HepG2 (cell line): ENCODE measurements at regions of chr9 and their contacts with region 1.

Region 1: GRCh38 chr9:130872912-130873503 is 23.6 kb downstream of the QRFP start:
- DNase-seq: peak; percentile 84
- ATAC-seq: peak; percentile 99
- H3K4me3 ChIP-seq: no peak overlapping the region
- H3K27ac ChIP-seq: peak overlapping the region; percentile 57
- H3K4me1 ChIP-seq: peaks cover 24% of the 10 kb centered on the region
- H3K27me3 ChIP-seq: no peaks in the 10 kb centered on the region
- CTCF ChIP-seq: no peak
- EP300 ChIP-seq: no peak
- POLR2A ChIP-seq: no peak
- RAD21 ChIP-seq: no peak

Region 2: DNA sequence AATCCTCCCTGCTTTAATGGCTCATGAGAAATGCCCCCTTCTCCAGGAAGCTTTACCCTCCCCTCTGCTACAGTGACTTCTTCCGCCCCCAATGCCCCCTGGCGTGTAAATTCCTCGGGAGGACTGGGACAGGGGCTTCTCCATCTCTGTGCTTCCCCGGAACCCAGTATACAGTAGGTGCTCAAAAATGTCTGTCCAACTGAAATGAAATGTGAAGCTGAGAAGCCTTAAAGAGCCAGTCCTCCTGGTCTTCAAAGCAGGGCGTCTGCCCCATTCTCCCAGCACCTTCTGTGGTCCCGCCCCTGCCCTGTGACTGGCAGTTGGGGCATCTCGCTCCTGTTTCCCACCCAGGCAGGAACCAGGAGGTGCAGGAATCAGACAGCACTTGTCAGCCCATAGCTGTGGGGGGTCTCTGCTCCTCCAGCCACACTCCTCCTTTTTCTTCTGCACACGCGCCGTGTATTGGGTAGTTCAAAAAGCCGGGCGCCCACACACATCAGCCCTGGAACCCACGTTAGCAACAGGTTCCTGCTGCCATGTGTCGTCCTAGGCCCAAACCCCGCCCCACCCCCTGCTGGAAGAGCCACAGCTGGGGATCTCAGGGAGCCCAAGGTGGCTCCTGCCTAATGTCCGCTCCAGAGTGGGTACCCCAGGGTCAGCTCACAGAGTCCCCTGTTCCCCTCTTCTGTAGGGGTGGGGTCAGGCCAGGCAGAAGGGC is 50.0 kb after region 1 on chr9:
- CTCF ChIA-PET with region 1: no interaction called
- POLR2A ChIA-PET with region 1: no interaction called
- in situ Hi-C with region 1: no loop called
- intact Hi-C with region 1: loop called (anchors 1 kb)
- DNase-seq: no peak
- ATAC-seq: no peak
- H3K4me3 ChIP-seq: no peak overlapping the region
- H3K27ac ChIP-seq: no peak overlapping the region
- H3K4me1 ChIP-seq: peaks cover 24% of the 10 kb centered on the region
- H3K27me3 ChIP-seq: peaks cover 38 to 98% of the 10 kb centered on the region in 2 experiments
- CTCF ChIP-seq: no peak
- EP300 ChIP-seq: no peak
- POLR2A ChIP-seq: no peak
- RAD21 ChIP-seq: no peak

Region 3: DNA sequence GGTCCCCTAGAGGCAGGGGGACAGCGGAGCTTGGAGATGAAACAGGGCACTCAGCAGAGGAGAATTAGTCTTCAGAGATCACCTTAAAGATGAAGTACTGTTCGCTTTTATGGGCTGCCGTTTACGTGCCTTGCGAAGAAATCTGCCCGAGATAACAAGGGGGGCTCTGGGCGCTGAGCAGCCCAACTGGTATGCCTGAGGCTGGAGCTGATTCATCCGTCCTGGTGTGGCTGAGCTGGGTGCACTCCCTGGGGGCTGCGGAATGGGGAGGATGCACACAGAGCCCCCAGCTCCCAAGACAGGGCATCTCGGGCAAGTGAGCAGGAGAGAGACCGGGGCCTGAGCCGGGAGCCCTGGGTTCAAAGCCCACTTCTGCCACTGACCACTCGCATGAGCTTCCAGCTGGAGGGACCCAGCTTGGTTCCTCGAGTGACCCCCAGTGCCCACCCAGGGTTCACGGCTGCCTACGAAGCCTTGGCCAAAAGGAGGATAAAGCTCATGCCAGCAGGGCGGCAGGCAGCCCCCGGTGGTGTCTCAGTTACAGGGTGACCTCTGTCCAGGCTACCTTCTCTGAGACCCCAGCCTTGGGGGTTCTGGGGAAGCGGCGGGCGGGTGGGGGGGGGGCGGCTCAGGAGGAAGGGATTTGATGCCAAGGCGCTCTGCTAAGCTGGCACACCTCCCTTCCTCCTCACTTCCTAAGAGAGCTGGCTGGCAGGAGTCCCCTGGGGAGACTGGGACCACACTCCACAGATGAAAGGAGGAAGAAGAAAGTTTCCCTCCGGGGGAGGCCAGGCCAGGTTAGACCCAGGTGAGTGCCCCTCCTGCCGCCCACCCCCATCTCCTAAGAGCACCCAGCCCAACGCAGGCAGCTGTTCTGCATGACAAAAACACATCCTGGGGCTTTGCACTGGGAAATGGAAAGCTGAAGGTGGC is 60.4 kb after region 1 on chr9:
- CTCF ChIA-PET with region 1: no interaction called
- POLR2A ChIA-PET with region 1: no interaction called
- in situ Hi-C with region 1: no loop called
- intact Hi-C with region 1: no loop called
- DNase-seq: no peak
- ATAC-seq: no peak
- H3K4me3 ChIP-seq: no peak overlapping the region
- H3K27ac ChIP-seq: no peak overlapping the region
- H3K4me1 ChIP-seq: peaks cover 51% of the 10 kb centered on the region
- H3K27me3 ChIP-seq: peaks cover 17 to 96% of the 10 kb centered on the region in 2 experiments
- CTCF ChIP-seq: no peak; the same call in 1 of the 2 replicates
- EP300 ChIP-seq: no peak
- POLR2A ChIP-seq: no peak
- RAD21 ChIP-seq: no peak

Region 4: DNA sequence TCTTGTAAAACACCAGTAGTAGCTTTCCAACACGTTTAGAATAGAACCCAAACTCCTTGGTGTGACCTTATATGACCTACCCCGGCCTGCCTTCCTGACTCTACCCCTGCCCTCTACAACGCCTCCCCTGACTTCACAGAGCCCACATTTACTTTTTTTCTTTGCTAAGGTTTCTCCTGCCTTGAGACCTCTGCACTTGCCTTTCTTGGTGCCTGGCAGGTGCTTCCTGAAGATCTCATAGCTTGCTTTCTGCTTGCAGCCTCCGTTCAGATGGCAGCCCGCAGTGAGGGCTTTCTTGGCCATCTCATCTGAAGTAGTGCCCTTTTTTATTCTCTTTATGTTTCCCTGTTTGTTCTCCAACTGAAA is 276.7 kb after region 1 on chr9:
- CTCF ChIA-PET with region 1: no interaction called
- POLR2A ChIA-PET with region 1: no interaction called
- in situ Hi-C with region 1: no loop called
- intact Hi-C with region 1: loop called (anchors 5 kb)
- DNase-seq: no peak
- ATAC-seq: no peak
- H3K4me3 ChIP-seq: no peak overlapping the region
- H3K27ac ChIP-seq: no peak overlapping the region
- H3K4me1 ChIP-seq: no peaks in the 10 kb centered on the region
- H3K27me3 ChIP-seq: no peaks in the 10 kb centered on the region
- CTCF ChIP-seq: no peak
- EP300 ChIP-seq: no peak
- POLR2A ChIP-seq: no peak
- RAD21 ChIP-seq: no peak